ENCODE measurements at regions of chr13 and their contacts with region 1.

Region 1: DNA sequence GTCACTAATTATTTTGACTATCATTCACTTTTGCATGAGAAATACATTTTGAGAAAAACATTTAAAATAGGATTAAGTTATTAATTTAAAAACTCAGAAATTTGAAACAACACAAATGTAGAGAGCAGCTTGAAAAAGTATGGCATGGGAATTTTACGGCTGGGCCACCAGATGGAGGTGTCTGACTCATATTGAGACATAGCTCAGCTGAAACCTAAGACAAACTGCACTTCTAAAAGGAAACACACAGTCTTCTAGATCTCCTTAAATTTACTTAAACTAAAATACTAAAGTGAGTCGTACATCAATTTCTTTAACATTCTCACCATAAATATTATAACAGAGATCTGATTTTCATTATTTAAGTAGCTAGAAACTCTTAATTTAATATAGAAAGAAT is 41.9 kb upstream of the POSTN start:
- DNase-seq: peak; percentile 80
- H3K4me3 ChIP-seq: no peak overlapping the region
- H3K27ac ChIP-seq: no peak overlapping the region
- H3K4me1 ChIP-seq: peaks cover 16% of the 10 kb centered on the region
- H3K27me3 ChIP-seq: no peaks in the 10 kb centered on the region
- CTCF ChIP-seq: peak; percentile 83

Region 2: GRCh38 chr13:37791699-37792098 is 151.2 kb after region 1 on chr13:
- CTCF ChIA-PET with region 1: no interaction called
- POLR2A ChIA-PET with region 1: no interaction called
- intact Hi-C with region 1: no loop called
- DNase-seq: peak; percentile 45
- H3K4me3 ChIP-seq: no peak overlapping the region
- H3K27ac ChIP-seq: no peak overlapping the region
- H3K4me1 ChIP-seq: peaks cover 33% of the 10 kb centered on the region
- H3K27me3 ChIP-seq: no peaks in the 10 kb centered on the region
- CTCF ChIP-seq: no peak

Region 3: DNA sequence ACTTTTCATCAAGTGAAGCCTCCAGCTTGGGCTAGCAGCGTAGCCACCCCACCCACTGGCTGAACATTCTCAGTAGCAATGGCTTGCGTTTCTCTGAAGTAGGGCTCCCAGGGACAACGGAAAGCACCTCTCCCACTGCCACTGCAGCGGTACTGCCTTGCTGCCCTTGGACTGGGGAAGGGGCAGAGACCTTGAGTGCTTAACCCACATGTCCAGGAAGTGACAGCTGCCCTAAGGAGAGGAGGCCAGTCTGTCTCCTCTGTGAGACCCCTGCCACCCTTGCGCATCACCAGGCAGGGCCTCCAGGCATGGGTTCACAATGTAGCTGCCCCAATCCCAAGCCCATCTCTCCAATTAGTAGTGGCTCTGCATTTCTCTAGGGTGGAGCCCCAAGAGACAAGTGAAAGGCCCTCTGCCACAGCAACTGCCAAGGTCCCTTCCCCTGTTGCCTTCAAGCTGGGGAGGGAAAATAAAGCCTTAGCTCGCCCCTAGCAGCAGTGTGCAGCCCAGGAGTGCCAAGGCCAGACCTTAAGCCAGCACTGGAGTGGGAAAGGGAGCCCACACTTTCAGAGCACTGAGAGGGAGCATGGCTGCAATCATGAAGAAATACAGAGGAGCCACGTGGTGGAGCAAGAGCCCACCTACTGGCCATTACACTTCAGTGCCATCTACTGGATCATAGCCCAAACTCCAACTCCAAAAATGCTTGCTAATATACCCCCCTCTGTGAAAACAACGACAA is 405.0 kb after region 1 on chr13:
- CTCF ChIA-PET with region 1: interaction called, 4 read pairs
- POLR2A ChIA-PET with region 1: no interaction called
- intact Hi-C with region 1: loop called (anchors 1 kb)
- DNase-seq: peak; percentile 88
- H3K4me3 ChIP-seq: no peak overlapping the region
- H3K27ac ChIP-seq: peak overlapping the region; percentile 28
- H3K4me1 ChIP-seq: peaks cover 9% of the 10 kb centered on the region
- H3K27me3 ChIP-seq: no peaks in the 10 kb centered on the region
- CTCF ChIP-seq: peak; percentile 85

Region 4: DNA sequence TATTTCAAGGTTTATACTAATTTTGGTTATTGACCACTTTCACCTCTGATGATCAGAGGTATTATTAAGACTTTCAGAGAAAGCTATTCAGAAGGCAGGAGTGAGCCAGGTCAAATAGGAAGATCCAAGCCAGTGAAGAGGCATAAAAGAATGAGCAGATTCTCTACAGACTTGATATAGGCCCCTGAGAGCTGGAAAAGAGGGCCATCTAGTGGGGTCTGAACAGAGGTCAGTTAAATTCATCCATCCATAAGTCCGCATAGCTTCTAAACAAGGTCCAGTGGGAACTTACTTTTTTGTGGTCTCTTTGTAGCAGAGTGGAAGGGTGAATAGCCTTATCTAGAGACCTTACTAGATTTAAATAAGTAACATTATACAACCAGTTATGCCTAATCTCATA is 582.6 kb after region 1 on chr13:
- CTCF ChIA-PET with region 1: interaction called, 6 read pairs
- POLR2A ChIA-PET with region 1: no interaction called
- intact Hi-C with region 1: loop called (anchors 5 kb)
- DNase-seq: peak; percentile 70
- H3K4me3 ChIP-seq: no peak overlapping the region
- H3K27ac ChIP-seq: no peak overlapping the region
- H3K4me1 ChIP-seq: no peaks in the 10 kb centered on the region
- H3K27me3 ChIP-seq: no peaks in the 10 kb centered on the region
- CTCF ChIP-seq: peak; percentile 59

Region 5: GRCh38 chr13:38530492-38530891 is 890.0 kb after region 1 on chr13:
- CTCF ChIA-PET with region 1: no interaction called
- POLR2A ChIA-PET with region 1: no interaction called
- intact Hi-C with region 1: loop called (anchors 5 kb)
- DNase-seq: peak; percentile 57
- H3K4me3 ChIP-seq: no peak overlapping the region
- H3K27ac ChIP-seq: no peak overlapping the region
- H3K4me1 ChIP-seq: peaks cover 14% of the 10 kb centered on the region
- H3K27me3 ChIP-seq: no peaks in the 10 kb centered on the region
- CTCF ChIP-seq: peak; percentile 68

Region 6: GRCh38 chr13:38582133-38582532 is 941.6 kb after region 1 on chr13:
- CTCF ChIA-PET with region 1: interaction called, 6 read pairs
- POLR2A ChIA-PET with region 1: no interaction called
- intact Hi-C with region 1: loop called (anchors 2 kb)
- DNase-seq: peak; percentile 82
- H3K4me3 ChIP-seq: no peak overlapping the region
- H3K27ac ChIP-seq: no peak overlapping the region
- H3K4me1 ChIP-seq: peaks cover 6% of the 10 kb centered on the region
- H3K27me3 ChIP-seq: no peaks in the 10 kb centered on the region
- CTCF ChIP-seq: peak; percentile 81

Region 7: DNA sequence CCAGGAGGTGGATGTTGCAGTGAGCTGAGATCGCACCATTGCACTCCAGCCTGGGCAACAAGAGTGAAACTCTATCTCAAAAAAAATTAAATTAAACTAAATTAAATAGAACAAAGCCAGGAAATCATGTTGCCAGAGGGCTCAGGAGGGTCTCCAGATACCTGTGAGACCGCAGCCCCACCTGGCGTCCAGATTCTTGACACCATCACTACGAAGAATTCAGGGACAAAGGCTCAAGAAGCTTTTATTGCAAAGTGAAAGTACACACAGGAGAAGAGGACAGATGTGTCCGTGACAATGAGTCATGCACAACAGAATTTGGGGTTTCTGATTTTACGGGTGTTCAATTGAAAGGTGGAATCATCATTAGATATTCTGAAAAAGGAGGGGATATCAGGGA is 1273.6 kb after region 1 on chr13:
- CTCF ChIA-PET with region 1: no interaction called
- POLR2A ChIA-PET with region 1: no interaction called
- intact Hi-C with region 1: loop called (anchors 10 kb)
- DNase-seq: no peak
- H3K4me3 ChIP-seq: no peak overlapping the region
- H3K27ac ChIP-seq: no peak overlapping the region
- H3K4me1 ChIP-seq: no peaks in the 10 kb centered on the region
- H3K27me3 ChIP-seq: no peaks in the 10 kb centered on the region
- CTCF ChIP-seq: no peak